Right cardiac atrium (tissue), 5 donors: ENCODE measurements at regions of chr13 and their contacts with region 1.

Region 1: GRCh38 chr13:44050450-44051063 is 170.9 kb downstream of the LACC1 start:
- DNase-seq: no peak
- ATAC-seq: no peak
- H3K4me3 ChIP-seq: no peak overlapping the region
- H3K27ac ChIP-seq: no peak overlapping the region
- H3K4me1 ChIP-seq: no peaks in the 10 kb centered on the region
- H3K27me3 ChIP-seq: no peaks in the 10 kb centered on the region

Region 2: DNA sequence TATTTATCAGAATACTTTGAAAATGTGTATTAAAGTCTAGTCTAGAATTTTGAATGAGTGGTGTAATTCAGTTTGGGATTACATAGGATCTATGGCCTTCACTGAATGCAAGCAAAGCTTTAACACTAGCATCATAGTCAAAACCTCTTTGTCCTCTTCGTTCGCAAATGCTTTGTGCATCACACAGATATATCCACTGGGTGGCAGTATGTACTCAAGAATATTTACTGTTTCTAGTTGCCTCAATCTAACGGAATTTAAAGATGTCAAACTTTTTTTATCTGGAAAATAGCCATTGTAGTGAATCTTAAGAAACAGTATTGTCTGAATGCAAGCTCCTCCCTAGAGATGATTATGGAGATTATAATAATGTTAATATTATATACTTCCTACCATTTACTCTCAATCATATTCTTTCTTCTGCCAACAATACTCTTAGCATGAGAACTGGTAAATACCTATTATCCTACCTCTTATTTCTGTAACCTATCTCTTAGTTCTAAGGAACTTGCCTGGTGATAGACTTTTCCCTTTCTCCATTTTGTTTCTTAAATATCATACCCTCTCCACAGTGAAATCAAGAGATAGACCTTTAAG is 145.0 kb before region 1 on chr13:
- intact Hi-C with region 1: loop called in 3 of 4 experiments (anchors 5 to 10 kb)
- DNase-seq: no peak
- ATAC-seq: peak; percentile 64 to 69
- H3K4me3 ChIP-seq: no peak overlapping the region
- H3K27ac ChIP-seq: no peak overlapping the region
- H3K4me1 ChIP-seq: no peaks in the 10 kb centered on the region
- H3K27me3 ChIP-seq: no peaks in the 10 kb centered on the region

Region 3: GRCh38 chr13:43915451-43915850 is 135.1 kb before region 1 on chr13:
- intact Hi-C with region 1: loop called in 1 of 4 experiments (anchors 10 kb)
- DNase-seq: no peak
- ATAC-seq: no peak
- H3K4me3 ChIP-seq: no peak overlapping the region
- H3K27ac ChIP-seq: no peak overlapping the region
- H3K4me1 ChIP-seq: peaks cover 5% of the 10 kb centered on the region
- H3K27me3 ChIP-seq: no peaks in the 10 kb centered on the region

Region 4: GRCh38 chr13:44108331-44108858 is 57.8 kb after region 1 on chr13:
- intact Hi-C with region 1: loop called in 2 of 4 experiments (anchors 10 kb)
- DNase-seq: peak; percentile 46 to 61 (median 58)
- ATAC-seq: peak; percentile 76 to 90
- H3K4me3 ChIP-seq: no peak overlapping the region
- H3K27ac ChIP-seq: peak overlapping the region; percentile 60
- H3K4me1 ChIP-seq: peaks cover 24% of the 10 kb centered on the region
- H3K27me3 ChIP-seq: no peaks in the 10 kb centered on the region

Region 5: DNA sequence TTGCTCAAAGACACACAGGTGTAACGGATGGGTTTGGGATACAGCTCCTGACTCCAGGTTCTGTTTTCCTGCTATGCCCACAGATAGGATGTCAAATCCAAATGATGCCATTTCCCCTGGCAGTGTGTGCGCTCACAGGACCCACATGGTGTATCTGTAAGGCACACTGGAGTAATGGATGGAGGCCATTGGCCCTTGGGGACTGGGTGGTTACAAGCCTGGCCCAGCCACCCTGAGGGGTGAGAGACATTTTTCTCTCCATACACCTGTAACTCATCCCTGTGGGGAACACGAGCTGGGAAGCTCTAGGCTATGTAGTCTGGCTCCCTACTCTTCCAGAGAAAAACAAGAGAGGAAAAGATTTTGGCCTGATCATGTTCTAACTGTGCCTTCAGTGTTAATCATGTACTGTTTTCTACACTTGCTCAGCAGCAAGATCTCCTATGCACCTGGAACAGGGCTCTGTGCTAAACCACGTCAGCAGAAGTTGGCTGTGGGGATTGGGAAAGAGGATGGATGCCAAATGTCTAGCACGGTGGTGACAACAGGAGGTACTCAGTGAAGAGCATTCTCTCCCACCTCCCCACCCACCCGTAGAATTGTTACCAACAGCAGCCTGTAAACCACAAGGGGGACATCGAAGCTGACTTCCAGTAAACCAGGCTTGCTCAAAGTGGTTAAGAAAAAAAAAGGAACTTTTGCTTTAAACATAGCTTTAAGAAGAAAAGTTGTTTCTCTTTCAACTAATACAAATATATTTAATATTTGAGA is 66.2 kb after region 1 on chr13:
- intact Hi-C with region 1: loop called in 1 of 4 experiments (anchors 10 kb)
- DNase-seq: peak in 1 of 3 donors; percentile 14
- ATAC-seq: peak; percentile 73 to 84
- H3K4me3 ChIP-seq: no peak overlapping the region
- H3K27ac ChIP-seq: peak overlapping the region; percentile 45
- H3K4me1 ChIP-seq: peaks cover 6% of the 10 kb centered on the region
- H3K27me3 ChIP-seq: no peaks in the 10 kb centered on the region

Region 6: DNA sequence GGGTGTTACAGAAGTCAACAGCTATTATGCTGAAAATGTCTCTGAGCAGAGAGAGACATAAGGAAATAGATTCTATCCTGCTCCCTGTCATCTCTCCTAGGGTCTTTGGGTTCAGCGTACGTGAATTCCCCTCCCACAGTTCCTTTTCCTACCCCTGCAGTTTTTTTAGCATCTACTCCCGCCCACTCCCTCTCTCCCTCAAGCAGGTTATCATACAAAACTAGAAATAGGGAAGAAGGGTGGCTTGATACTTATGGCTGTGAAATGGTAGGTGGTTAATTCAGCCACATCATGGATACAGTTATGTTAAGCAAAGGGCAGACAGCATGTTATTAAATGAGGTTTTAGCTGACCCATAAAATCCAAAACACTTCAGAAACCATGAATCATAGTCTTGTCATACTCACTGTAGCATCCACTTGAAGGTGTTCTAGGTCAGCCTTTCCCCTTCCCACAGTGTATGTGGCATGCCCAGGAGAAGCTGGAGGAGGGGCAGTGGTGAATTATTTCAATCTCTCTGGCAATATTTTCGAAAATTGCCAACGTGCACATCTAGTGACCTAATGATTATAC is 86.2 kb after region 1 on chr13:
- intact Hi-C with region 1: loop called in 1 of 4 experiments (anchors 5 kb)
- DNase-seq: no peak
- ATAC-seq: no peak
- H3K4me3 ChIP-seq: no peak overlapping the region
- H3K27ac ChIP-seq: no peak overlapping the region
- H3K4me1 ChIP-seq: peaks cover 7% of the 10 kb centered on the region
- H3K27me3 ChIP-seq: no peaks in the 10 kb centered on the region

Region 7: GRCh38 chr13:44300895-44301638 is 250.5 kb after region 1 on chr13:
- intact Hi-C with region 1: loop called in 1 of 4 experiments (anchors 10 kb)
- DNase-seq: peak; percentile 28 to 54 (median 53)
- ATAC-seq: peak; percentile 76 to 84
- H3K4me3 ChIP-seq: no peak overlapping the region
- H3K27ac ChIP-seq: peak overlapping the region; percentile 44
- H3K4me1 ChIP-seq: peaks cover 9% of the 10 kb centered on the region
- H3K27me3 ChIP-seq: no peaks in the 10 kb centered on the region